Transverse colon (tissue), 4 donors: ENCODE measurements at regions of chr16 and their contacts with region 1.

Region 1: GRCh38 chr16:22688463-22688862 is 125.5 kb upstream of the HS3ST2 start:
- DNase-seq: no peak
- H3K4me3 ChIP-seq: no peak overlapping the region
- H3K27ac ChIP-seq: no peak overlapping the region
- H3K4me1 ChIP-seq: peaks cover 0 to 15% (median 10%) of the 10 kb centered on the region in 4 donors
- H3K27me3 ChIP-seq: no peaks in the 10 kb centered on the region
- CTCF ChIP-seq: no peak
- EP300 ChIP-seq: no peak
- POLR2A ChIP-seq: no peak

Region 2: DNA sequence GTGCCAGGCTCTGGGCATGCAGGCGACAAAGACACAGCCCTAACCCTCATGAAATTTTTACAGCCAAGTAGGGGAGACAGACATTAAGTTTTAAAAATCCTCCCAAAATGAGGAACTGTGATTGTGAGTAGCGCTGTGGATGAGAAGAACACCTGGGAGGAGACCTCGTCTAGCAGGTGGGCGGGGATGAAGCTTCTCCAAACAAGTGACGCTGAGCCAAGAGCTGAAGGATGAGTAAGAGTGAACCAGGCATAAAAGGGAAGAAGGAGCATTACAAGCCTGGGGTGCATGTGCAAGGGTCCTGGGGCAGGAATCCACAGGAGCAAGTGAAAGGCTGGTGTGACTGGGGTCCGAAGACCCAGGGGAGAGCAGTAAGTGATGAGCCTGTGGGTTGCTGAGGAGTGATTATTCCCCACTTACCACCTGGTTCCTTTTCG is 23.9 kb before region 1 on chr16:
- in situ Hi-C with region 1: no loop called
- intact Hi-C with region 1: loop called (anchors 2 kb)
- DNase-seq: no peak
- H3K4me3 ChIP-seq: no peak overlapping the region
- H3K27ac ChIP-seq: peak overlapping the region in 2 of 4 donors; percentile 51
- H3K4me1 ChIP-seq: no peaks in the 10 kb centered on the region
- H3K27me3 ChIP-seq: no peaks in the 10 kb centered on the region
- CTCF ChIP-seq: no peak
- EP300 ChIP-seq: no peak
- POLR2A ChIP-seq: no peak

Region 3: GRCh38 chr16:22763437-22764080 is 75.1 kb after region 1 on chr16:
- in situ Hi-C with region 1: no loop called
- intact Hi-C with region 1: no loop called
- DNase-seq: no peak
- H3K4me3 ChIP-seq: no peak overlapping the region
- H3K27ac ChIP-seq: peak overlapping the region in 3 of 4 donors; percentile 58 to 68 (median 62)
- H3K4me1 ChIP-seq: peaks cover 0 to 10% (median 9%) of the 10 kb centered on the region in 4 donors
- H3K27me3 ChIP-seq: no peaks in the 10 kb centered on the region
- CTCF ChIP-seq: no peak
- EP300 ChIP-seq: no peak
- POLR2A ChIP-seq: no peak